ENCODE measurements at regions of chr1 and their contacts with region 1.

Region 1: DNA sequence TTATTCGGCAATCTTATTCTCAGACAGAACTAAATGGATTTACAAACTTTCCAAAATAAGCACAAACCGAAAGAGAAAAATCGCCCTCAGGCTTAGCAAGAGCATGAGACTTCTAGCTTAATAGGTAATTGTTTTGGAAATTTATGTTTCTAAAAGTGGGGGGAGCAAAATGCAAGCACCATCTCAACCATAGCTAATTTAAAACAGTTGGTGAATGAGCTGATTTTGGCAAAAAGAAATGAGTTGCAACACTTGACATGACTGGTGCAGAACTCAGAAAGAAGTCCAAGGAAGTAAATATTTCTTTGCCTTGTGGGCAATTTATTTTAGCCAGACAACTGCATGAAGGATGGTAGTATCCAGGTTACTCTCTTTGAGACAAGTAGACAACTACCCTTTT is 71.5 kb upstream of the PTGFR start:
- DNase-seq: no peak
- ATAC-seq: no peak
- H3K4me3 ChIP-seq: no peak overlapping the region
- H3K27ac ChIP-seq: no peak overlapping the region
- H3K4me1 ChIP-seq: no peaks in the 10 kb centered on the region
- H3K27me3 ChIP-seq: no peaks in the 10 kb centered on the region
- CTCF ChIP-seq: no peak
- POLR2A ChIP-seq: no peak
- RAD21 ChIP-seq: no peak

Region 2: GRCh38 chr1:78475888-78476610 is 56.7 kb after region 1 on chr1:
- CTCF ChIA-PET with region 1: no interaction called
- POLR2A ChIA-PET with region 1: no interaction called
- RAD21 ChIA-PET with region 1: no interaction called
- intact Hi-C with region 1: loop called (anchors 10 kb)
- DNase-seq: no peak
- ATAC-seq: no peak
- H3K4me3 ChIP-seq: no peak overlapping the region
- H3K27ac ChIP-seq: no peak overlapping the region
- H3K4me1 ChIP-seq: no peaks in the 10 kb centered on the region
- H3K27me3 ChIP-seq: no peaks in the 10 kb centered on the region
- CTCF ChIP-seq: no peak
- POLR2A ChIP-seq: no peak
- RAD21 ChIP-seq: no peak

Measured in HCT116 (cell line).